Head of caudate nucleus (tissue), 42 donors: ENCODE measurements at regions of chr15 and their contacts with region 1.

Region 1: GRCh38 chr15:100627789-100628395 is 25.5 kb downstream of the ASB7 start:
- DNase-seq: peak in 41 of 42 donors; percentile 24 to 88 (median 70)

Region 2: DNA sequence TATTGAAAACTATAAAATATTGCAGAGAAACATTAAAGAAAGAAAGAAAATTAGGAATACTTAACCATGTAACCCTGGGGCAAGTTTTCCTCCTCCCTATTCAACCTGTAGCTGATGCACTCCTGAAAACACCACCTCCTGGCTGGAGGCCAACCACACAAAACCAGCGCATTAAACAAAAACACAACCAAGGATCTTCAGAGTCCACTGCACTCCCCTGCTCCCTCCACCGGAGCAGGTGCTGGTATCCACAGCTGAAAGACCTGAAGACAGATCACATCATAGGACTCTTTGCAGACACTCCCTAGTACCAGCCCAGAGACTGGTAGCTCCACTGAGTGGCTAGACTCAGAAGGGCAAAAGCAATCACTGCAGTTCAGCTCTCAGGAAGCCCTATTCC is 272.6 kb before region 1 on chr15:
- intact Hi-C with region 1: no loop called
- DNase-seq: no peak

Region 3: DNA sequence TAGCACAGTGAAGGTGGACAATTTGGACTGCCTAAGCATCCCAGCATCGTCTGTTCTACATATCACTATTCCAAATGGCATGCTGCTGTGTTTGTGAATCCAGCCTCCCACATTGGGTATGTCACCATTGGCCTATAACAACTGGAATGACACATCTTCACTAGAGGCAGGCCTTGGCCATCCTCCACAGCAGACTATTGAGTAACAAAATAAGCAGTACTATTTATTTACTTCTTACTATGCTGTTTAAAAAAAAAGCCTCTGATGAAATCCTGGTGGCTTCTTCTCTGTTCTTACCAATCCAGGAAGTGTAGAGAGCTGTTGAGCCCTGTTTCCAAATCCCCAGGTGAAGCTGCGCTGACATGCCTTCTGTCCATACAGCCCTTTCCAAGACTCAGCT is 68.6 kb before region 1 on chr15:
- intact Hi-C with region 1: no loop called
- DNase-seq: no peak

Region 4: GRCh38 chr15:100873029-100873677 is 245.3 kb after region 1 on chr15:
- intact Hi-C with region 1: loop called (anchors 10 kb)
- DNase-seq: peak in 39 of 42 donors; percentile 29 to 92 (median 74)

Region 5: GRCh38 chr15:101008158-101009139 is 380.6 kb after region 1 on chr15:
- intact Hi-C with region 1: loop called (anchors 2 kb)
- DNase-seq: peak; percentile 47 to 90 (median 81)

Region 6: DNA sequence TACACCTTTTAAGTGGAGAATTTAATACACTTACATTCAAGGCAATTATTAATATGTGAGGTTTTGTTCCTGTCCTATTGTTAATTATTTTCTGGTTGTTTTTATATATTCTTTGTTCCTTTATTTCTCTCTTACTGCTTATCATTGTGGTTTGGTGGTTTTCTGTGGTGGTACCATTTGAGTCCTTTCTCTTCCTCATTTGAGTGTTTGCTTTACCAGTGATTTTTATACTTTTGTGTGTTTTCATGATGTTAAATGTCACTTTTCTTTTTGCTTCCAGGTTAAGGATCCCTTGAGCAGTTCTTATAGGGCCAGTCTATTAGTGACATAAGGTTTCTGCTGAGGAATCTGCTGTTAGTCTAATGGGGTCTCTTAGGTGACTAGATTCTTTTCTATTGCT is 407.7 kb after region 1 on chr15:
- intact Hi-C with region 1: no loop called
- DNase-seq: no peak

Region 7: DNA sequence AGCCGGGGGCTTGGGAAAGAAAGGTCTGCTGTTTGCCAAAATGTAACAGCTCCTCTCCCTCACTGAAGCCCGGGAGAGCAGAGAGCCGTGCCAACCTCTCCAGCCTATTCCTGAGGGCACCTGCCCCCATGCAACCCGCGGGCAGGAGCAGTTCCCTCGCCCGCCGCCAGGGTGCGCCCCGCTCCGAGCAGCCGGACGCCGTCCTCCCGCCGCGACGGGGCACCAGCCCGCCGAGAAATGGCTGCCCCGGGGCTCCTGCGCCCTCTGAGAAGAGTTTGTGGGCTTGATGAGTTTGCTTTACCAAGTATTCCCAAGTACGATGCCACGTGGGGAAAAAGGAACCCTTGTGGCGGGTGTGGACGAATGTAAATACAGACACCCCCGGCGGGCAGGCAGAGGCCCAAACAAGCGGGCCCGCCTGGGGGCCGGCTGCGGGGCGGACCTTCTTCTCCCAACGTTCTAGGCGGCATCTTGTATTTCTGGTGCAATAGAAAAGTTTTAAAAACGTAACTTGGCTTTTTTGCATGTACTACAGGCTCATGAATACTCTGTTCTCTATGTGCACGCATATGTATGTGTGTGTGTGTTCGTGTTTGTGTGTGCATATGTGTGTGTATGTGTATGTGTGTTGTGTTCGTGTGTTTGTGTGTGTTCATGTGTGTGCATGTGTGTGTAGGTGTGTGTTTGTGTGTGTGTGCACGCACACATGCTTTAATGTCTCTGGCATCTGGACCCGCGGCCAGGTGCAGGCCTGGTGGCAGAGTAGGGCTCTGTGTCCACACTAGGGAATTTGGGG is 461.1 kb after region 1 on chr15:
- intact Hi-C with region 1: no loop called
- DNase-seq: peak in 40 of 42 donors; percentile 27 to 87 (median 70)